Activated B cell treated with CpG ODN at 0.5 μM for 24 hours (primary cell): ENCODE measurements at regions of chr16 and their contacts with region 1.

Region 1: DNA sequence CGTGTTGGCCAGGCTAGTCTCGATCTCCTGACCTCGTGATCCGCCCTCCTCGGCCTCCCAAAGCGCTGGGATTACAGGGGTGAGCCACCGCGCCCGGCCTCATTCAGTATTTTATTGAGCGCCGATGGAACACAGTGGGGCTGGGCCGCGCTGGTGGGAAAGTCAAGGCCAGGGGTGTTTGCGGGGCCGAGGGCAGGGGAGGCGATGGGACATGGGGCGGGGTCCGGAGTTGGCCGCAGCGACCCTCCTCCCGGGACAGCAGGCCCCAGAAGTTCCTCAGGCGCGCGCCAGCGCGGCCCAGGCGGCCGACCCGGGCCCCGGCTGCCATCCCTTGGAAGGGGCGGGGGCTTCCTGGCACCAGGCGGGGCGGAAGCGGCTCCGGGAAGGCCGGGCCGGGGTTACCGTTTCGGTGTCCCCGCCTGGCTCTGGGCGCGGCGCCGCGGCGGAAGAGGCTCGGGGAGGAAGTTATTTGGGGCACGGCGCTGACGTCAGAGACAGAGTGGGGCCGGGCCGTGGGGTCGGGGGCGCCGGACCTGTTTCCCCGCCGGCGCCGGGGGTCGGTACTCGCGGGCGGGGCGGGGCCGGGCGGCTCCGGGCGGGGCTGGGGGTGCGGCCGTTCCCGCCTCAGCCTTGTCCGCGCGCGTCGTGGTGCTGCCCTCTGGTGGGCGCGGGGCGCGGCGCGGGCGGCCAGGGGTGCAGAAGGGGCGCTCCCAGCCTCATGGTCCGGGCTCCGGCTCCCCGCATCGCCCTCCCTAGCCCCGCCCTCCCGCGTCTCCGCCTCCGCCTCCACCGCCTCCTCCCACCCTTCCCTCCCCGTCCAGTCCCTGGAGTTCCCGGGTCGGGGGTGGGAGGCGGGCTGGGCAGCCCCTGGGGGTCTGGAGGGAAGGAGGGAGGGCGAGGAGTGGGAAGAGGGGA is 952 bp upstream of the PRSS27 start:
- DNase-seq: peak; percentile 87
- ATAC-seq: peak; percentile 93
- H3K4me3 Mint-ChIP-seq: peak overlapping the region; percentile 81
- H3K27ac Mint-ChIP-seq: peak overlapping the region; percentile 53
- H3K4me1 Mint-ChIP-seq: peaks cover 5% of the 10 kb centered on the region
- H3K27me3 Mint-ChIP-seq: peaks cover 11% of the 10 kb centered on the region
- CTCF ChIP-seq: no peak

Region 2: GRCh38 chr16:2673066-2673999 is 47.6 kb before region 1 on chr16:
- CTCF ChIA-PET with region 1: interaction called, 3 read pairs
- POLR2A ChIA-PET with region 1: no interaction called
- intact Hi-C with region 1: loop called (anchors 1 kb)
- DNase-seq: peak; percentile 91
- ATAC-seq: peak; percentile 94
- H3K4me3 Mint-ChIP-seq: peak overlapping the region; percentile 85
- H3K27ac Mint-ChIP-seq: peak overlapping the region; percentile 71
- H3K4me1 Mint-ChIP-seq: peaks cover 29% of the 10 kb centered on the region
- H3K27me3 Mint-ChIP-seq: no peaks in the 10 kb centered on the region
- CTCF ChIP-seq: no peak

Region 3: DNA sequence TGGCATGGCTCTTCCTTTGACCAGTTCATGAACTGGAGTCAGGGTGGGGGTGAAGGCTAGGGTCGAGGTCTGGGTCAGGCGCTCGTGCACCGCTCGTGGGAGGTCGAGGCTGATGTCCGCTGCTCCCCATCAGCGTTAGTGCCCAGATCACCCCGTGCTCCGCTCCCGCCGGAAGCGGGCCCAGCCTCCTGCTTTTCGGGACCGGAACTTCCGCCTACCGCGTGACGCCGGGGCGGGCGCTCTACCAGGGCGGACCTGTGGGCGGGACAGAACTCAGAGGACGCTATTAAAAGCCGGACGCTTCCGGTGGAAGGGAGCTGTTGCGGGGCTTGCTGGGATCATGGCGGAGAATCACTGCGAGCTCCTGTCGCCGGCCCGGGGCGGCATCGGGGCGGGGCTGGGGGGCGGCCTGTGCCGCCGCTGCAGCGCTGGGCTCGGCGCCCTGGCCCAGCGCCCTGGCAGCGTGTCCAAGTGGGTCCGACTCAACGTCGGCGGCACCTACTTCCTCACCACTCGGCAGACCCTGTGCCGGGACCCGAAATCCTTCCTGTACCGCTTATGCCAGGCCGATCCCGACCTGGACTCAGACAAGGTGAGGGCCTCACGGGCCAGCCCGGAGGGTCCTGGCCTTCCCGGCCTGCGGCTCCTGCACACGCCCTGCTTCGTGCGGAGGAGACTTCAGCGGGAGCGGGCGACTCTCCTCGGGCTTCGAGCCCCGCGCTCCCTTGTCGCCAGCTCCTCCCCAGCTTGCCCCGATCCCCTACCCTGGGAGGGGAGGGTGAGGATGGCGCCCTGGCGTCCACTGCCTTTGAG is 38.6 kb before region 1 on chr16 and contains the start of gene KCTD5:
- CTCF ChIA-PET with region 1: no interaction called
- POLR2A ChIA-PET with region 1: interaction called, 8 read pairs
- intact Hi-C with region 1: loop called (anchors 1 kb)
- DNase-seq: peak; percentile 93
- ATAC-seq: peak; percentile 85
- H3K4me3 Mint-ChIP-seq: peak within 1 kb of the TSS; percentile 96
- H3K27ac Mint-ChIP-seq: peak within 1 kb of the TSS; percentile 92
- H3K4me1 Mint-ChIP-seq: peaks cover 31% of the 10 kb centered on the region
- H3K27me3 Mint-ChIP-seq: no peaks in the 10 kb centered on the region
- CTCF ChIP-seq: no peak
- total RNA-seq, gene KCTD5: 30.3 and 31.4 TPM in 2 replicates

Region 4: GRCh38 chr16:2692948-2693651 is 27.9 kb before region 1 on chr16:
- CTCF ChIA-PET with region 1: no interaction called
- POLR2A ChIA-PET with region 1: no interaction called
- intact Hi-C with region 1: no loop called
- DNase-seq: no peak
- ATAC-seq: no peak
- H3K4me3 Mint-ChIP-seq: no peak overlapping the region
- H3K27ac Mint-ChIP-seq: no peak overlapping the region
- H3K4me1 Mint-ChIP-seq: peaks cover 17% of the 10 kb centered on the region
- H3K27me3 Mint-ChIP-seq: no peaks in the 10 kb centered on the region
- CTCF ChIP-seq: no peak

Region 5: GRCh38 chr16:3001316-3001715 is 280.3 kb after region 1 on chr16:
- CTCF ChIA-PET with region 1: no interaction called
- POLR2A ChIA-PET with region 1: no interaction called
- intact Hi-C with region 1: no loop called
- DNase-seq: no peak
- ATAC-seq: no peak
- H3K4me3 Mint-ChIP-seq: no peak overlapping the region
- H3K27ac Mint-ChIP-seq: no peak overlapping the region
- H3K4me1 Mint-ChIP-seq: peaks cover 6% of the 10 kb centered on the region
- H3K27me3 Mint-ChIP-seq: peaks cover 9% of the 10 kb centered on the region
- CTCF ChIP-seq: no peak